ENCODE measurements at regions of chr17 and their contacts with region 1.

Region 1: DNA sequence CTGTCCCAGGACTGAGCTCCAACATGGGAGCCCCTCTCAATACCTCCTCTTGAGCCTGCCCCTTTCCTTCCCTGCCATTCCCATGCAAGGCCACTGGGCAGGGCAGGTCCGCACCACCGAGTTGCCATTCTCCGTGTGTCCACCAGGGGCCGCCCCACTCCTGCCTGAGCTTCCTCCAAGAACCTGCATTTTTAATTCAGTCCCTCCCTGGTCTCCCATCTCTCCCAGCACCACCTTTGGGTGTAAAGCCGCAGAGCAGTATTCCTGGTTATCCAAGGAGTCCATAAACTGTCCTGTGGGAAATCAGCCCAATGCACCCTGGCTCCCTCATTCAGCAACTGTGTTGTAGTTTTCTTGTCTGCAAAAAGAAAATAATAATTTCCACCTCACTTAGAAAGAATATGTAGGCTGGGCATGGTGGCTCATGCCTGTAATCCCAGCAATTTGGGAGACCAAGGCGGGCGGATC is 15.9 kb upstream of the ANKRD40CL start:
- DNase-seq: peak; percentile 76 to 86
- H3K4me3 ChIP-seq: no peak overlapping the region
- H3K27ac ChIP-seq: no peak overlapping the region
- H3K4me1 ChIP-seq: no peaks in the 10 kb centered on the region
- H3K27me3 ChIP-seq: no peaks in the 10 kb centered on the region
- CTCF ChIP-seq: peak; percentile 100

Region 2: GRCh38 chr17:50547035-50547735 is 236.0 kb before region 1 on chr17 and contains the start of gene SPATA20:
- CTCF ChIA-PET with region 1: interaction called, 11 read pairs
- POLR2A ChIA-PET with region 1: no interaction called
- intact Hi-C with region 1: loop called (anchors 5 kb)
- DNase-seq: peak; percentile 82 to 89
- H3K4me3 ChIP-seq: peak within 1 kb of the TSS; percentile 68
- H3K27ac ChIP-seq: no peak within 1 kb of the TSS
- H3K4me1 ChIP-seq: peaks cover 17% of the 10 kb centered on the region
- H3K27me3 ChIP-seq: no peaks in the 10 kb centered on the region
- CTCF ChIP-seq: peak; percentile 99
- total RNA-seq, gene SPATA20: 41.5 and 60.5 TPM in 2 replicates

Region 3: GRCh38 chr17:50824429-50824828 is 41.2 kb after region 1 on chr17:
- CTCF ChIA-PET with region 1: no interaction called
- POLR2A ChIA-PET with region 1: no interaction called
- intact Hi-C with region 1: no loop called
- DNase-seq: no peak
- H3K4me3 ChIP-seq: no peak overlapping the region
- H3K27ac ChIP-seq: no peak overlapping the region
- H3K4me1 ChIP-seq: no peaks in the 10 kb centered on the region
- H3K27me3 ChIP-seq: no peaks in the 10 kb centered on the region
- CTCF ChIP-seq: no peak

Region 4: GRCh38 chr17:50834429-50835300 is 51.4 kb after region 1 on chr17:
- CTCF ChIA-PET with region 1: interaction called, 13 read pairs
- POLR2A ChIA-PET with region 1: no interaction called
- intact Hi-C with region 1: no loop called
- DNase-seq: peak in 1 of 2 experiments; percentile 2
- H3K4me3 ChIP-seq: no peak overlapping the region
- H3K27ac ChIP-seq: no peak overlapping the region
- H3K4me1 ChIP-seq: no peaks in the 10 kb centered on the region
- H3K27me3 ChIP-seq: peaks cover 27% of the 10 kb centered on the region
- CTCF ChIP-seq: no peak

Region 5: DNA sequence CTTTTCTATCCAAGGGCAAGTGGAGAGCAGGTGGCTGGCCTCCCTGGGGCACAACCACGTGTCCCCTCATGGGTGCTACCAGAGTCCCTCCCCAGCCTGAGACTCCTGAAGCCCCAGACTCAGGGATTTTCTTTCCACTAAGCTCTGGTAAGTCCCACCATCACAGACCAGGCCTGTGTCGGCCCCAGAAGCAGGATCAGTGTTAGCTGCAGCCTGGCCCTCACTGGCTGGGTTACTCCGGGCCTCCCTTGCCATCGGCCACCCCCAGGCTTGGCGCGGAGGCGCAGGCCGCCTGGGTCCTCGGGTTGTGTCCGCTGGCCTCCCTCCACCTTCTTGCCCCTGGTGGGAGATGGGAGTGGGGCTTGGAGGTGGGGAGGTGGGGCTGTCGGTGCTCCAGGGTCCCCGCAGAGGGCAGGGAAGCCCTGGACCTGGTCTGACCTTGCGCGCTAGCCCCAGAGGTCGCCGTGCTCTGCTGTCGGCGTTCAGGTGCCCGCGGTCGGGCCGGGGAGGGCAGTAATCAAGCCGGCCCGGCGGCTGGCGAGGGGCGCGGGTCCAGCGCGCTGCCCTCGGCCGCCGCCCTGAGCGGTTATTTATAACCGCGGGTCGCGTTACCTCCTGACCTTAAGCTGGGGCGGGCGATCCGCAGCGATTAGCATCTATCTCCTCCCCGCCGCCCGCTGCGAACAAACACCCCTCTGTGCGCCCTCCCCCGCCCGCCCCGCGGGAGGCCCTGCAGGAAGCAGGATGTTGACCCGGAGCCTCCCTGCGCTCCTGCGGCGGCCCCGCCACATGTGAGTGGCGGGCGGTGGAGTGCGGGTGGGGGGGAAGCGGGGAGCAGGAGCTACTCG is 161.1 kb after region 1 on chr17:
- CTCF ChIA-PET with region 1: interaction called, 11 read pairs
- POLR2A ChIA-PET with region 1: no interaction called
- intact Hi-C with region 1: no loop called
- DNase-seq: peak; percentile 84 to 86
- H3K4me3 ChIP-seq: peak overlapping the region; percentile 60
- H3K27ac ChIP-seq: peak overlapping the region; percentile 9; the same call in 1 of the 2 replicates
- H3K4me1 ChIP-seq: peaks cover 54% of the 10 kb centered on the region
- H3K27me3 ChIP-seq: no peaks in the 10 kb centered on the region
- CTCF ChIP-seq: no peak

Region 6: DNA sequence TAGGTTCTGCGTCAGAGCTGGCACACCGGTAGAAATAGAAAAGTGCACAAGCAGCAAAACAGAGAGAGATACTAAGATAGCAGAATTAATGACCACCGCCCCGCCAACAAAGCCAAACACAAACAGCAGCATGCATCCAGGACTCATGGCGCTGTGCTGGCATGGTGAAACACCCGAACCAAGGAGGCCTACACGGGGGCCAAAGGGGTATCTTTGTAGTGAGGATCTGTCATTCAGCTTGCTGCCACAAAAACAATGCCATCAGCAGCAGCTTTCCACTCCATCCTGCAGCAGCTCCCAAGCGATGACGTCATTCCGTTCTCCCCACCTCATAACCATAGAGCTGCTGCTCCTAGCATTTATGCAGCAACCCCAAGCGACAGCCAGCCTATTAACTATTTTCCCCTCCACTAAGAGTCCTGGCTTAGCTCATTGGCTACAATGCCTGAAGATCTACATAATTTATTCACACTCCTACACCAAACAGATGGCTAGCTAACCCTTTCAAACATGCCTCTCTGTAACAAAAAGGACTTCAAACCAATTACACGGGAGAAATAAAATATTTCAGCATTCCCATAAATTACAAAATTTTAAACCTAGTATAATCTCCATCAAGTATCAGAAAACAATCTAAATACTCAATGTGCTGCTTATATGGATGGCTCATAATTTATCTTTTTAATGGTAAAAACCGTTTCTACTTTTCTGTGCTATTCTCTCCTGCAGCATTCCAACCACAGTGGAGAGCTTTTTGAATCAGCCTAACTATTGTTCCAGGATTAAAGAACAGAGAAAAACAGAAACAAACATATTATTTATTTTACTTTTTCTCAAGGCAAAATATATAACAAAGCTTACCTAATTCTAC is 263.5 kb after region 1 on chr17:
- CTCF ChIA-PET with region 1: interaction called, 26 read pairs
- POLR2A ChIA-PET with region 1: no interaction called
- intact Hi-C with region 1: no loop called
- DNase-seq: no peak
- H3K4me3 ChIP-seq: no peak overlapping the region
- H3K27ac ChIP-seq: no peak overlapping the region
- H3K4me1 ChIP-seq: no peaks in the 10 kb centered on the region
- H3K27me3 ChIP-seq: no peaks in the 10 kb centered on the region
- CTCF ChIP-seq: no peak

Region 7: GRCh38 chr17:51153210-51154072 is 370.2 kb after region 1 on chr17 and contains the start of gene NME1:
- CTCF ChIA-PET with region 1: no interaction called
- POLR2A ChIA-PET with region 1: no interaction called
- intact Hi-C with region 1: loop called (anchors 1 kb)
- DNase-seq: peak; percentile 96 to 99
- H3K4me3 ChIP-seq: peak within 1 kb of the TSS; percentile 72
- H3K27ac ChIP-seq: peak within 1 kb of the TSS; percentile 78
- H3K4me1 ChIP-seq: peaks cover 22% of the 10 kb centered on the region
- H3K27me3 ChIP-seq: no peaks in the 10 kb centered on the region
- CTCF ChIP-seq: peak; percentile 86
- total RNA-seq, gene NME1: 115 and 172 TPM in 2 replicates